ENCODE measurements at regions of chr3 and their contacts with region 1.

Region 1: GRCh38 chr3:177229791-177230190 is 32.5 kb upstream of the TBL1XR1 start:
- DNase-seq: no peak
- H3K4me3 ChIP-seq: no peak overlapping the region
- H3K27me3 ChIP-seq: no peaks in the 10 kb centered on the region
- CTCF ChIP-seq: no peak

Region 2: DNA sequence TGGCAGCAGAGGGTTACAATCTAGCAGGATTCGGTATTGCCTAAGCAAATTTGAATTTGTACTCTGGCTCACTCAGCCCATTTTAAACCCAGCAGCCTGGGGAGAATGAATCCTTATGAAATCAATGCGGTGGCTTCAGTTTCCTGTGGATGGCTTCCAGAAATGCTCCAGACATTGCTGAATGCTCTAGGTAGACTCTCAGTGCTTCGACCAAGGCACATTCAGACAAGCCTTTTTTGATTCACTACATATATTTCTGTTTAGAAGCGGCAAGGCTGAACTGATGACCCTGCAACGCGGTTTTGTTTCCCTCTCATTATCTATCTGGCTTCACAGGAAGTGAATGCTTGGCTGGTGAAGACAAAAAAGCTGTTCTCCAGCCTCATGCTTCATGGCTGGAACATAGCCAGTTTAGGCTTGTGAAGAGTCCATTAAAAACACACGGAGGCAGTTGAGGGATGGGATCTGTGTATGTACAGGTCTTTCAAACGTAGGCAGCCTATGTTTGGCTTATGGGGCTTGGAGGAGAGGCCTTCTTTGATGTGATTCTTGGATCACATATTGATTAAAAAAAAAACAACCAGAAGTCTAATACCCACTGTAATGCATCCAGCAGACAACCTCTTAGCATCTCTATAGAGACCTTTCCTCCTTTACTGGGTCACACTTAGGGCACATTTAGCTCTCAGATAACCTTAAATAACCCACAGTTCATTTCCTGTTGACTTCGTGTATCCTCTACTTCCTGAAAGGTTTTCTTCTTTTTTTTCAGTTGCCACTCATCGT is 367.7 kb after region 1 on chr3:
- CTCF ChIA-PET with region 1: no interaction called
- POLR2A ChIA-PET with region 1: interaction called, 18 read pairs
- DNase-seq: peak; percentile 57
- H3K4me3 ChIP-seq: no peak overlapping the region
- H3K27me3 ChIP-seq: no peaks in the 10 kb centered on the region
- CTCF ChIP-seq: no peak